ENCODE measurements at regions of chr2 and their contacts with region 1.

Region 1: DNA sequence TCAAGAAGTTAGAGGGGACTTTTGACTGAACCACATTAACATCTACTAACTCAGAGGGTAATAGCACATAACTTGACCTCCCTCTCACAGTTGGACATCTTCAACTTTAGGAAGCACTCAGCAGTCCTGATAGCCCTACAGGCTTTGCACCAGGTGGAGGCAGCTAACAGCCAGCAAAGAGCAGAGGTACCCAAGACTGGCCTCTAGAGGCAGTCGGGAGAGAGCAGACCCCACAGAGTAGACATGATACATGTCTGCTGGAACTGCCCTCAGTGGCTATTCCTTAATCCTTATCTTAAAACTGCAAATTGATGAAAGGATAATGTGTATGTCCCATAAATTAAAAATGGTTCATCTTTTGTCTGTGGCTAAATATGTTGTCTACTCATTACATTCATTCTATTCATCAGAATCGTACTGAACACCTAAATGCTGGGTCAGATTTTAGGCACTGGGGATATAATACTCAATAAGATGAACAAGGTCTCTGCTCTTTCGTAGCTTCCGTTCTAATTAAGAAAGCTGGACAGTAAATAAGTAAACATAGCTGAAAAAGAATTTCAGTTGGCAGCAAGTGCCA is 49.8 kb downstream of the CAB39 start:
- DNase-seq: peak; percentile 28
- H3K4me3 ChIP-seq: no peak overlapping the region
- H3K27ac ChIP-seq: no peak overlapping the region
- H3K4me1 ChIP-seq: peaks cover 18% of the 10 kb centered on the region
- H3K27me3 ChIP-seq: no peaks in the 10 kb centered on the region
- CTCF ChIP-seq: peak; percentile 44 to 57

Region 2: GRCh38 chr2:230777721-230778120 is 15.3 kb after region 1 on chr2:
- CTCF ChIA-PET with region 1: no interaction called
- dilution Hi-C with region 1: no loop called
- in situ Hi-C with region 1: no loop called
- intact Hi-C with region 1: loop called (anchors 2 kb)
- DNase-seq: peak; percentile 79
- H3K4me3 ChIP-seq: no peak overlapping the region
- H3K27ac ChIP-seq: peak overlapping the region; percentile 96
- H3K4me1 ChIP-seq: peaks cover 82% of the 10 kb centered on the region
- H3K27me3 ChIP-seq: no peaks in the 10 kb centered on the region
- CTCF ChIP-seq: no peak